MCF 10A (cell line): ENCODE measurements at regions of chr1 and their contacts with region 1.

Region 1: DNA sequence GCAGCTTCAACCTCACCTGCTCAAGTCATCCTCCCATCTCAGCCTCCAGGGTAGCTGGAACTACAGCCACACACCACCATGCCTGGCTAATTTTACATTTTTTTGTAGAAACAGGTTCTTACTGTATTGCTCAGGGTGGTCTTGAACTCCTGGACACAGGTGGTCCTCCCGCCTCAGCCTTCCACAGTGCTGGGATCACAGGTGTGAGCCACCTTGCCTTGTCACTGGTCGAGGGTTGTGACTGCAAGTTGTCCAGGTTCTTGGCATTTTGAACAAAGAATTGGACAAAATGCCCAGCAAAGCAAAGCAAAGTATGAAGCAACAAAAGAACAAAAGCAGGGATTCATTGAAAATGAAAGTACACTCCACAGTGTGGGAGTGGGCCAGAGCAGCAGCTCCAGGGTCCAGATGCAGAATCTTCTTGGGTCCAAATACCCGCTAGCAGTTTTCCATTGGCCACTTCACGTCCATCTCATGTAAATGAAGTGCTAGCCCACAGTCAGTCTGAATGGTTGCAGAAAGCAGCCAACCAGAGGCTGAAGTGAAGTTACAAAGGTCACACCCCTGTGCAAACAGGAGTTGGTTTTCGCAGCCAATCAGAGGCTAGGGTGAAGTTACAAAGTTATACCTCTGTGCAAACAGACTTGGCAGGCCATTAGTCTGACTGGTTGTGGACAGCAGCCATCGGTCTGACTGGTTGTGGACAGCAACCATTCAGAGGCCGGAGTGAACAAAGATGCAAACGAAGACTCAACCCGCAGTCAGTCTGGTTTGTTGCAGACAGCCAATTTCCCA is 109.5 kb upstream of the KIF26B start:
- DNase-seq: peak; percentile 31
- H3K4me3 Mint-ChIP-seq: no peak overlapping the region
- H3K27ac Mint-ChIP-seq: no peak overlapping the region
- H3K4me1 Mint-ChIP-seq: peaks cover 17% of the 10 kb centered on the region
- H3K27me3 Mint-ChIP-seq: no peaks in the 10 kb centered on the region
- CTCF ChIP-seq: no peak

Region 2: GRCh38 chr1:244599937-244600350 is 445.3 kb before region 1 on chr1:
- CTCF ChIA-PET with region 1: interaction called, 53 read pairs
- POLR2A ChIA-PET with region 1: no interaction called
- intact Hi-C with region 1: loop called (anchors 1 kb)
- DNase-seq: peak; percentile 97
- H3K4me3 Mint-ChIP-seq: peak overlapping the region; percentile 77
- H3K27ac Mint-ChIP-seq: peak overlapping the region; percentile 99
- H3K4me1 Mint-ChIP-seq: peaks cover 12% of the 10 kb centered on the region
- H3K27me3 Mint-ChIP-seq: no peaks in the 10 kb centered on the region
- CTCF ChIP-seq: no peak

Region 3: DNA sequence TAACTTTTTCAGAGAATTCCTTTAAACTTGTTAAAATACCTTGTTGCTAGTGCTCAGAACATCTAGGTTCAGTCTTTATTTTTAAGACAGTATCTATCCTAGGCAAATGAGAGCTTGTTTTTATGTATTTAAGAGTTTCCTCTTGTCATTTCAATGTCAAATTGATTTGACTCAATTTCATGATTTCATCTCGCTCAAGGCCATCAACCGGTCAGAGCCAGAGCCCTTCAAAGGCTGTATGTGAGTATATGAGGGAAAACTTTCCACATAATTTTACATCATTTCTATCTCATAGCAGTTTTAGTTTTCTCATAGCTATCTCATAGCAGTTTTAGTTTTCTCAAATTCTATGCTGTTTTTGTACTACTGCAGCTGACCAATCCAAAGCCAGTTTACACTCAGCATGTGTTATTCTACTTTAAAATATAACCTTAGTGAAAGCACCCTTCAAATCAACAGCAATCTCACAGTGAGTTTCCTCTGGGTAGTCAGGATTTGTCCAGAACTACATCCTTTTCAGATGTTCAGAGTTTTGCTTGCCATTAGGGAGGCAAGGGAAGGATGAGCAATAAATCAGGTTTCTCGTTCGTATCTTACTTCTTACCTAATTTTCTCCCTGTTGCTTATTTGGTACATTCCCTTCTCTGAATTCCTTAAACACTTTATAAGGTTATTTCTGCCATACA is 193.6 kb before region 1 on chr1:
- CTCF ChIA-PET with region 1: interaction called, 174 read pairs
- POLR2A ChIA-PET with region 1: interaction called, 9 read pairs
- intact Hi-C with region 1: no loop called
- DNase-seq: no peak
- H3K4me3 Mint-ChIP-seq: no peak overlapping the region
- H3K27ac Mint-ChIP-seq: peak overlapping the region; percentile 43
- H3K4me1 Mint-ChIP-seq: peaks cover 25% of the 10 kb centered on the region
- H3K27me3 Mint-ChIP-seq: no peaks in the 10 kb centered on the region
- CTCF ChIP-seq: no peak

Region 4: DNA sequence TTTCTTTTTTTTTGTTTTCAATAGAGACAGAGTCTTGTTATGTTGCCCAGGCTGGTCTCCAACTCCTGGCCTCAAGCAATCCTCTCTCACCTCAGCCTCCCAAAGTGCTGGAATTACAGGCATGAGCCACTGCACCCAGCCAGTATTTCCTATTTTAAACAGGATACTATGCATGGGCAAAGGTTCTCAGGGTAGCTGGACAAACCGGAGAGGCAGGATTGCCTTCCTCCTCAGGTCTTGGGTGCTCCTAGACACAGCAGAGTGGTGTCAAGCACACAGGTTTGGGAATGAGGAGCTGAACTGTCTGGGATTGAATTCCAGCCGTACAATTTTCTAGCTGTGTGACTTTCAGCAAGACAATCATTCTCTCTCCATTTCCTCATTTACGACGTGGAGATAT is 158.0 kb before region 1 on chr1:
- CTCF ChIA-PET with region 1: interaction called, 10 read pairs
- POLR2A ChIA-PET with region 1: no interaction called
- intact Hi-C with region 1: no loop called
- DNase-seq: no peak
- H3K4me3 Mint-ChIP-seq: no peak overlapping the region
- H3K27ac Mint-ChIP-seq: no peak overlapping the region
- H3K4me1 Mint-ChIP-seq: peaks cover under 1% of the 10 kb centered on the region
- H3K27me3 Mint-ChIP-seq: no peaks in the 10 kb centered on the region
- CTCF ChIP-seq: no peak

Region 5: DNA sequence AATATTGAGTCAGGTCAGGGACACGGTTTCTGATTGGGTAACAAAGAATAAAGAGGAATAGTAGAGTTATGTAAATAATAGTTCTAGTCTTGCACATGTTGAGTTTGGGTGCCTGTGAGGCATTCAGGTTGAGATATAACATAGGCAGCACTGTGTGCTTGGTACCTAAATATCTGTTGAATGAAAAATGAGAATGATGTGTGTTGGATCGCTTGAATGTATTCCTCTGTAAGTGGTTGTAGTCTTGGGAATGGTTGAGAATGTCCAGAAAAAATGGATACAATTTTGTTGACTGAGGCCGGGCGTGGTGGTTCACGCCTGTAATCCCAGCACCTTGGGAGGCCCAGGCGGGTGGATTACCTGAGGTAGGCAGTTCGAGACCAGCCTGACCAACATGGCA is 64.7 kb before region 1 on chr1:
- CTCF ChIA-PET with region 1: interaction called, 22 read pairs
- POLR2A ChIA-PET with region 1: interaction called, 5 read pairs
- intact Hi-C with region 1: no loop called
- DNase-seq: no peak
- H3K4me3 Mint-ChIP-seq: no peak overlapping the region
- H3K27ac Mint-ChIP-seq: peak overlapping the region; percentile 18
- H3K4me1 Mint-ChIP-seq: no peaks in the 10 kb centered on the region
- H3K27me3 Mint-ChIP-seq: no peaks in the 10 kb centered on the region
- CTCF ChIP-seq: no peak

Region 6: DNA sequence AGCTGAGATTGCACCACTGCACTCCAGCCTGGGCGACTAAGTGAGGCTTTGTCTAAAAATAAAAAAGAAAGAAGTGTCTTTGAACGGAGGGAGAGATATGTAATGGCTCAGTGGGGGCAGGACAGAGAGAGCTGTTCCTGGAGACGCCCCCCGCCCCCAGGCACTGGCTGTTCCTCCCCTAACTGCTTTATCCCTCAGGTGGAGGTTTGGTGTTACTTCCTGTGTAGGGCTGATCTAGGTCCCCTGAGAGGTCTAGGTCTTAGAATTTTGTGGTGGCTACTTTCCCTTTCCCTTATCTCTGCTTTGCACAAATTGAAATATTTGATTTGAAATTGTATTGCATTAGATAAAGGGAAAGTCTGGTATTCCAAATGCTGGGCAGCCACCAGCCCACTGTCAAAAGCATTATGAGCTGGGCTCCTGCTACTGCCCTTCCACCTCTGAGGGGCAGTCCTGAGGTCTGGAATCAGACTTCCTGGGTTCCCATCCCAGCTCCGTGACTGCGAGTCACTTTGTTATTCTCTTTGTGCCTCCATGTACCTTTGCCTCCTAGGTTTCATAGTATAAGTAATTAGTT is 25.3 kb before region 1 on chr1:
- CTCF ChIA-PET with region 1: interaction called, 36 read pairs
- POLR2A ChIA-PET with region 1: interaction called, 6 read pairs
- intact Hi-C with region 1: no loop called
- DNase-seq: no peak
- H3K4me3 Mint-ChIP-seq: no peak overlapping the region
- H3K27ac Mint-ChIP-seq: no peak overlapping the region
- H3K4me1 Mint-ChIP-seq: no peaks in the 10 kb centered on the region
- H3K27me3 Mint-ChIP-seq: no peaks in the 10 kb centered on the region
- CTCF ChIP-seq: no peak

Region 7: DNA sequence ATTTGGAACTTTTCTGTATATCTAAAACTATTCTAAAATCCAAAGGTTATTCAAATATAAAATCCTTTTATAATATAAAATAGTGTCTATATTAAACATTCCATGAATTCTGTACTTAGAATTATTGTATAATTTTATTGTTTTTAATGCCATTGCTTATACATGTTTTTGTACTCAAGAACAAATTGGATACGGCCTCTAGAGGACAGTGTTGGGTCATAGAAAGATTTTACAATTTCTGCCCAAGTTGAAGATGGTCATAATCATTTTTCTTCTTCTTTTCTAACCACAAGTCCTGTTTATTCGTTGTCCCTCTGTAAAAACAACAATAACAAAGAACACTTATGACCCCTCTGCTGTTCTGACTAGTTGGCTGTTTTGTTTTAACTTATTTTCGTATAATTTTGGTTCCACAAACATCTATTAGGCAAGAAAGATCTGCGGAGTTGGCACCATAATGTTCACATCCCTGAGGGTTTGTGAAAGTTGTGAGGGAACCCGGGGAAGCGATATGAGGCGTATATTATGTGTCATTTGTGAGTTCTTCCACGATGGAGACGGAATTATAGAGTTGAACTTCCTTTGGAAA is 33.8 kb after region 1 on chr1:
- CTCF ChIA-PET with region 1: interaction called, 13 read pairs
- POLR2A ChIA-PET with region 1: no interaction called
- intact Hi-C with region 1: no loop called
- DNase-seq: peak; percentile 73
- H3K4me3 Mint-ChIP-seq: no peak overlapping the region
- H3K27ac Mint-ChIP-seq: no peak overlapping the region
- H3K4me1 Mint-ChIP-seq: peaks cover 4% of the 10 kb centered on the region
- H3K27me3 Mint-ChIP-seq: no peaks in the 10 kb centered on the region
- CTCF ChIP-seq: peak; percentile 97